MCF 10A (cell line): ENCODE measurements at regions of chr1 and their contacts with region 1.

Region 1: GRCh38 chr1:209513226-209513625 is 70.3 kb upstream of the CAMK1G start:
- DNase-seq: peak; percentile 84
- H3K4me3 Mint-ChIP-seq: no peak overlapping the region
- H3K27ac Mint-ChIP-seq: no peak overlapping the region
- H3K4me1 Mint-ChIP-seq: peaks cover 11% of the 10 kb centered on the region
- H3K27me3 Mint-ChIP-seq: no peaks in the 10 kb centered on the region
- CTCF ChIP-seq: peak; percentile 93

Region 2: GRCh38 chr1:209527993-209528392 is 14.8 kb after region 1 on chr1:
- CTCF ChIA-PET with region 1: interaction called, 46 read pairs
- POLR2A ChIA-PET with region 1: interaction called, 31 read pairs
- intact Hi-C with region 1: no loop called
- DNase-seq: peak; percentile 36
- H3K4me3 Mint-ChIP-seq: no peak overlapping the region
- H3K27ac Mint-ChIP-seq: peak overlapping the region; percentile 60
- H3K4me1 Mint-ChIP-seq: peaks cover 64% of the 10 kb centered on the region
- H3K27me3 Mint-ChIP-seq: no peaks in the 10 kb centered on the region
- CTCF ChIP-seq: no peak

Region 3: GRCh38 chr1:209542585-209542984 is 29.4 kb after region 1 on chr1:
- CTCF ChIA-PET with region 1: interaction called, 8 read pairs
- POLR2A ChIA-PET with region 1: interaction called, 10 read pairs
- intact Hi-C with region 1: no loop called
- DNase-seq: peak; percentile 89
- H3K4me3 Mint-ChIP-seq: no peak overlapping the region
- H3K27ac Mint-ChIP-seq: peak overlapping the region; percentile 68
- H3K4me1 Mint-ChIP-seq: peaks cover 52% of the 10 kb centered on the region
- H3K27me3 Mint-ChIP-seq: no peaks in the 10 kb centered on the region
- CTCF ChIP-seq: no peak